Psoas muscle (tissue), 8 donors: ENCODE measurements at regions of chr15 and their contacts with region 1.

Region 1: DNA sequence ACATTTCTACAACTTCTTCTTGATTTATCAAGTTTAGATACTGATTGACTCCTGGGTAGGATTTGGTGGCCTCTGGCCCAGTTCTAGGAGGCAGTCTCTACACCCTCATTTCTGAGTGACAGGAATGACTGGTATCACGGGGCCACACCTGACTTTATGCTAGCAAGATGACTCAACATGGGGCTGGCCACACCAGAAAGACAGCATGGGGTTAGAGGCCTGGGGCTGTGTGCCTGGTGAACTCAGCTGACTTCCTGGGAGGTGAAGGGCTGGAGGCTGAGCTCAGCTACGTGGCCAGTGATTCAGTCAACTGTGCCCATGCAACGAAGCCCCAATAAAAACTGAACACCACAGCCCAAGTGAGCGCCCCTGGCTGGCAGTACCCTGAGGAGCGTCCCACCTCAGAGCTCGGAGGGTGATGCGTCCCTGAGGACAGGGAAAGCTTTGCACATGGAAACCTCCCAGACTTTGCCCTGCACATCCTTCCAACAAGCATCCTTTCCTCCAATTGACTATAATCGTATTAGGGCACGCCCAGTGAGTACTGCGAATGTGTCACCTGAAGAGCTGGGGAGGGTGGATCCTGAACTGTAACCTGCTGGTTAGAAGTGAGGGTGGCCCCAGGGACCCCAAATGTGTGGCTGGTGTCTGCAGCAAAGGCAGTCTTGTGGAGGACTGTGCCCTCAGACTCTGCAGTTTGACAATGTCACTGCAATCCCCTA is 57.2 kb downstream of the NIPA2 start:
- DNase-seq: no peak
- ATAC-seq: no peak
- H3K4me3 ChIP-seq: no peak overlapping the region
- H3K27ac ChIP-seq: no peak overlapping the region
- H3K4me1 ChIP-seq: no peaks in the 10 kb centered on the region
- H3K27me3 ChIP-seq: no peaks in the 10 kb centered on the region
- CTCF ChIP-seq: no peak

Region 2: DNA sequence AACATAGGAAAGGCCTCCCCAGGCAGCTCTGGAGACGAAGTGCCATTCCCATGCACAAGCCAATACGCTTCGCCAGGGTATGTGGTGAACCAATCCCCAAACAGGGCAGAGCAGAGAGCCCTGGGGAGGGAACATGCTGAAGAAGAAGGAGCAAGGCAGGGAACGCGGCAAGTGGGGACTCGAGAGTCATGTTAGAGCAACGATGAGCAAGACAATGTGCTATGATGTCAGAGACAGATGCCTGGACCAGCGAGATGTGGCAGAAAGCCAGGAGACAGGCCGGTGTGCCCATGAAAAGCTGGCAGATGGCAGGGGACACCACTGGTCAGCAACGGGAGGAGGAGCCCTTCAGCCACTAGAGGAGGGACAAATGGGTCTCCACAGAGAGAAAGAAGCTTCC is 17.5 kb before region 1 on chr15:
- intact Hi-C with region 1: loop called in 1 of 2 experiments (anchors 2 kb)
- DNase-seq: no peak
- ATAC-seq: peak in 2 of 4 donors; percentile 19 to 61
- H3K4me3 ChIP-seq: no peak overlapping the region
- H3K27ac ChIP-seq: no peak overlapping the region
- H3K4me1 ChIP-seq: no peaks in the 10 kb centered on the region
- H3K27me3 ChIP-seq: no peaks in the 10 kb centered on the region
- CTCF ChIP-seq: no peak